Sigmoid colon (tissue), 7 donors: ENCODE measurements at regions of chr6 and their contacts with region 1.

Region 1: DNA sequence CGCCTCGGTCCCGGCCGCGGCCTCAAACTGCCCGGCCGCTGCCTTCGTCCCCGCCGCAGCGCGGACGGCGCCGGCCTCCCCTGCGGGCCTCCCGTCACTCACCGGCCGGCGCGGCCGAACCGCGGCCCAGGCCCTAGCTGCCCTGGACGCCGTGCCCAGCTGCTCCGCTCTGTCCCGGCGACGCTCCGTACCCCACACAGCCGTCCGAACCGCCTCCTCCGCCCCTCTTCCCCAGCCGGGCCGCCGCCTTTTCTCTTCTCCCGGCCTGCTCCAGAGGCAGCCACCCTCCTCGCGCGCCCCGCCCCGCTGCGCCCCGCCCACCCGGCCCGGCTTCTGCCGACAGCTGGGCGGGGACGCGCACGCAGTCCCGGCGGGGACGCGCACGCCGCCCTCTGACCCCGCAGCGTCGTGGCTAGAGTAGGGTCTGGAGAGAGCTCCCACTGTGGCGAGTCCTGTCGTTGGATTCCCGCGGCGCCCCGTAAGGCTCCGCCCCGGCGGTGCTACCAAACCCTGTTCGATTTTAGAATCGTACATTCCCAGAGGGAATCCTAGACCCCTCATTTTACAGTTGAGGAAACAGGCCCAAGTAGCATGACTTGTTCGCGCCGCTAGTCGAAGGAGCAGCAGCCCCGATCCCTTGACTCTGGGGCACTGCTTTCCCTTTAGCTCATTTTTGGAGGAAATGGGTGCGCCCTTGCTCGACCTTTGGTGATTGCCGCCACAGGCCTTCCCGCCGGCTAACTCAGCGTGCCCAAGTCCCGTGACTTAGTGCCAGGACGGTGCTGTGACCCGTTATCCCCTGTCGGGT is at the start of gene FBXO30:
- DNase-seq: peak; percentile 91
- H3K4me3 ChIP-seq: peak within 1 kb of the TSS; percentile 47 to 91 (median 76)
- H3K27ac ChIP-seq: peak within 1 kb of the TSS; percentile 89 to 98 (median 96)
- H3K4me1 ChIP-seq: peaks cover 0 to 49% (median 39%) of the 10 kb centered on the region in 4 donors
- H3K27me3 ChIP-seq: no peaks in the 10 kb centered on the region
- CTCF ChIP-seq: peak; percentile 25 to 56 (median 40)
- EP300 ChIP-seq: no peak
- POLR2A ChIP-seq: peak; percentile 76 to 78
- total RNA-seq, gene FBXO30: 37.9 to 53.9 (median 43.9) TPM

Region 2: DNA sequence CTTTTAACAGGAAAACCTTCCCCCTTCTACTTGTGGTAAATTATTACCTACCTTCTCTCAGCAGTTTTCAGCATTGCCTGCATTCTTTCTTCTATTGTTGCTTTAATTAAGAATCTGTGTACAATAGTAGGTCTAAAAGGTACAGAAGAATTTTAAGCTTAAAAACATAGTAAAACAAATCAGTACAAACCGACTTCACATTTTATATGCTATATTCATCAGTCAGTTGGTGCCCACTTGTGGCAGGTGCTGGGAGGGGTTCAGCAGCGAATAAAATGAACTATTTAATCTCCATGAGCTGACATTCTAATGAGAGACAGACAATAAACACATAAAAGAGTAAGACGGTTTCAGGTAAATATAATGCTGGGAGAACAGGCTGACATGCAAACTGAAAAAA is 73.3 kb after region 1 on chr6:
- intact Hi-C with region 1: loop called (anchors 2 kb)
- DNase-seq: peak; percentile 63
- H3K4me3 ChIP-seq: no peak overlapping the region
- H3K27ac ChIP-seq: peak overlapping the region; percentile 47 to 70 (median 66)
- H3K4me1 ChIP-seq: peaks cover 0 to 55% (median 28%) of the 10 kb centered on the region in 4 donors
- H3K27me3 ChIP-seq: no peaks in the 10 kb centered on the region
- CTCF ChIP-seq: peak; percentile 44 to 64 (median 58)
- EP300 ChIP-seq: no peak
- POLR2A ChIP-seq: no peak

Region 3: GRCh38 chr6:145963216-145964068 is 148.7 kb after region 1 on chr6:
- intact Hi-C with region 1: loop called (anchors 2 kb)
- DNase-seq: peak; percentile 76
- H3K4me3 ChIP-seq: peak overlapping the region; percentile 66 to 81 (median 74)
- H3K27ac ChIP-seq: peak overlapping the region; percentile 85 to 92 (median 88)
- H3K4me1 ChIP-seq: peaks cover 0 to 40% (median 34%) of the 10 kb centered on the region in 4 donors
- H3K27me3 ChIP-seq: no peaks in the 10 kb centered on the region
- CTCF ChIP-seq: no peak
- EP300 ChIP-seq: no peak
- POLR2A ChIP-seq: no peak